ENCODE measurements at regions of chr7 and their contacts with region 1.

Region 1: DNA sequence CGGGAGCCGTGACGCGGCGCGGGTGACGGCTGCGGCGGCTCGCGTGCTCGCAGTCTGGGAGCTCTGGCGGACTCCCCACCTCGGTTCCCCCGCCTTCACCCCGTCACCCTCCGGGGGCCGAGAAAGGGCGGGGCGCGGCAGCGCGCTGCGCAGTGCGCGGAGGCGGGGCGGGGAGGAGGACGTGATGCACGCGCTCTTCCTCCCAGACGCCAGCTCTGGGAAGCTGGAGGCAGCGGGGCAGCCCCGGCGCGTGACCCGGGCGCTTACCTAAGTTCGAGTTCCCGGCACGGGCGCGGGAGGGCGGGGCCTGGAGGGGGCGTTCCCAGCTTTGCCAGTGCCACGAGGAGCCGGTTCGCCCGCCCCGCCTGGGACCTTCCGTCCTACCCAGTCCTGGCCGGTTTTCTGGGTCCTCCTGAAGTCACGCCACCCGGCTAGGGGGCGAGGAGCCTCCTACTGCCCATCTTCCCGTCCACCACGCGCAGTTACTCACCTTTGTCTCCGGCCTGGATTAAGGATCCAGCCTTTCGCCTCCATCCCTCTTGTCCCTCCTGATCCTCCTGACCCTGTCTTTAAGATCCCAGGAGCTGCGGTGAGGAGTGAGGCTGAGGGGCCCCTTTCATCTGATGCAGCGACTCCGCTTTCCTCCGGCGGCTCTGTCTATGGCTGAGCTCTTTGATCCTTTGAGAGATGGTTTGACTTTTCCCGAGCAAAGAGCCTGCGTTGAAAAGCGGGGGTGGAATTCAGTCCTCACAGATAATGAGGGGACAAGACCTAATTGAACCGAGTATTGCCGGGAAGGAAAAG is 470 bp upstream of the NAMPT start:
- DNase-seq: peak; percentile 97 to 99
- H3K4me3 ChIP-seq: peak overlapping the region; percentile 79 to 97
- H3K27ac ChIP-seq: peak overlapping the region; percentile 95 to 99
- H3K4me1 ChIP-seq: peaks cover 0 to 3% of the 10 kb centered on the region in 2 donors
- H3K27me3 ChIP-seq: no peaks in the 10 kb centered on the region
- CTCF ChIP-seq: no peak

Region 2: GRCh38 chr7:105876091-105876963 is 408.9 kb before region 1 on chr7 and contains the start of gene ATXN7L1:
- intact Hi-C with region 1: loop called (anchors 2 kb)
- DNase-seq: peak; percentile 84 to 96
- H3K4me3 ChIP-seq: peak within 1 kb of the TSS; percentile 76 to 99
- H3K27ac ChIP-seq: peak within 1 kb of the TSS; percentile 58 to 76
- H3K4me1 ChIP-seq: peaks cover 3 to 4% of the 10 kb centered on the region in 2 donors
- H3K27me3 ChIP-seq: no peaks in the 10 kb centered on the region
- CTCF ChIP-seq: peak; percentile 28 to 89 (median 52)
- total RNA-seq, gene ATXN7L1: 7.5 TPM

Region 3: DNA sequence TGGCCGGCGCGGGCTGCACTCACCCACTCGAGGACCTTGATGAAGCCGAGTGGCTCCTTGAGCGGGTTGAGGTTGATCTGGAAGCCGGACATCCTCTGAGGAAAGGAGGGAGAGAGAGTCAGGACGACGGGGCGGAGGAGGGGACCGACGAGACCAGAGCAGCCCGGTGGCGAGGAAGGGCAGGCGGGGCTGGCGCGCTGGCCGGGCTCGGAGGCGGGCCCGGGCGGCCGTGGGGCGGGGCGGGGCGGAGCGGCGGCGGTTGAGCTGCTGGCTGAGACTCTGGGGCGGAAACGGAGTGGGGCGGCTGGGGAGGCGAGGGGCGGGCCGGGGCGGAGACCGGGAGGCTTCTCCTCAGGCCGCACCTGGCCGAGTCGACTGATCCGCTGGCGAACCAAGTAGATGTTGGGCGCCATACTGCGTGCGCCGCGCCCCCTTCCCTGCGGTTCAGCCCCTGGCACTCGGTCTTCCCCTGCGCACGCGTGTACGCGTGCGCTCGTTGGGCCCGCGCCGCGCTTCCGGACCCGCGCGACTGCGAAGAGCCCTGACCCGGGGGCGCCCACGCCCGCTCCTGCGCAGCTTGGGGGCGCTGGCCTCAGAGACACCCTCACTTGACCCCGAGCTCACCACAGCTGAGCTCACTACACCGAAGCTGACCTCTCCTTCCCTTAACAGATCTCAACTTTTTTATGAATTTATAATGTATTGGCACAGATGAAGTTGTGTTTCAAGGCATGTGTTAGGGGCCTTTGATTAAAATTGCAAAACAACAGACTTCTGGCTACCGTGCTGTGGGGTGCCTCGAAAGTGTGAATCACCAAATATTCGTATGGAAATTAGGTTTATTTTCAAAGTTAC is 172.9 kb before region 1 on chr7 and contains the start of gene SYPL1:
- intact Hi-C with region 1: loop called (anchors 5 kb)
- DNase-seq: peak; percentile 70 to 95
- H3K4me3 ChIP-seq: peak within 1 kb of the TSS; percentile 69 to 76
- H3K27ac ChIP-seq: peak within 1 kb of the TSS; percentile 98
- H3K4me1 ChIP-seq: peaks cover 3 to 12% of the 10 kb centered on the region in 2 donors
- H3K27me3 ChIP-seq: no peaks in the 10 kb centered on the region
- CTCF ChIP-seq: peak in 1 of 3 experiments; percentile 16
- total RNA-seq, gene SYPL1: 17.5 TPM

Region 4: DNA sequence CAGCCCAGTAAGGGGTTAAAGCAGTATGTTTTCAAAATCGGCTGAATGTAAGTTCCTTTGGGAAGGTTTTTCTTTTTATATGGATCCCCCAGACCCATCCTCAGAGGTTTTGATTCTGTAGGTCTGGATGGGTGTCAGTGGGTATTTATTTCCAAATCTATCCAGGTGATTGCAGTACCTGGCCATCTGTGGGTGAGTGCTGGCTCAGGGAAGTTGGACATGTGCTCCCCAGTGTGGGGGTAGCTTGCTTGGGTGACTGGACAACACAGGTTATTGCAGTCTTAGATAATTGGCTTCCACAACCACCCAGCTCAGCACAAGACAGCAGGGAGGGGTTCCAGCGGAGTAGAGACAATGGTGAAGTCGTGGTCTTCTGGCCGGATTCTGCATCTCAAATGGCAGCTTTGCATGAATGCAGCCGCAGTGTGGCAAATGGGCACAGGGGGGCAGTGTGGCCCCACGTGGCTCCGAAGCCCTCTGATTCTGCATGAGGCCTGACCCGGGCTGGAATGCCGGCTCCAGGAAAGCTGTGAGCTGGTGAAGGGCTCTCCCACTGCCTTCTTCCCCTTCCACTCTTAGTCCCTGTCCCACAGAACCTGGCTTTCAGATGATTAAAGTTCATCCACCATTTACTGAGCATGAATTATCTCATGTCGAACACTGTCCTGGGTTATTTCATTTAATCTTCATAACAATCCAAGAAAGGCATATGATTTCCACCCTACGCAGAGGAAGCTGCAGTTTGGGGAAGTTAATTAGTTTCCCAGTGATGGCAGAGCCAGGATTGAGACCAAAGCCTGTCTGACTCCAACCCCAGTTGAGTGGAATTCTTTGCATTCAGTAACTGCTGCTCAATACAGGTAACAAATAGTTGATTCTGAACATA is 108.6 kb before region 1 on chr7:
- intact Hi-C with region 1: loop called (anchors 5 kb)
- DNase-seq: peak; percentile 41 to 92
- H3K4me3 ChIP-seq: no peak overlapping the region
- H3K27ac ChIP-seq: no peak overlapping the region
- H3K4me1 ChIP-seq: no peaks in the 10 kb centered on the region
- H3K27me3 ChIP-seq: no peaks in the 10 kb centered on the region
- CTCF ChIP-seq: peak; percentile 91 to 98 (median 93)

Region 5: DNA sequence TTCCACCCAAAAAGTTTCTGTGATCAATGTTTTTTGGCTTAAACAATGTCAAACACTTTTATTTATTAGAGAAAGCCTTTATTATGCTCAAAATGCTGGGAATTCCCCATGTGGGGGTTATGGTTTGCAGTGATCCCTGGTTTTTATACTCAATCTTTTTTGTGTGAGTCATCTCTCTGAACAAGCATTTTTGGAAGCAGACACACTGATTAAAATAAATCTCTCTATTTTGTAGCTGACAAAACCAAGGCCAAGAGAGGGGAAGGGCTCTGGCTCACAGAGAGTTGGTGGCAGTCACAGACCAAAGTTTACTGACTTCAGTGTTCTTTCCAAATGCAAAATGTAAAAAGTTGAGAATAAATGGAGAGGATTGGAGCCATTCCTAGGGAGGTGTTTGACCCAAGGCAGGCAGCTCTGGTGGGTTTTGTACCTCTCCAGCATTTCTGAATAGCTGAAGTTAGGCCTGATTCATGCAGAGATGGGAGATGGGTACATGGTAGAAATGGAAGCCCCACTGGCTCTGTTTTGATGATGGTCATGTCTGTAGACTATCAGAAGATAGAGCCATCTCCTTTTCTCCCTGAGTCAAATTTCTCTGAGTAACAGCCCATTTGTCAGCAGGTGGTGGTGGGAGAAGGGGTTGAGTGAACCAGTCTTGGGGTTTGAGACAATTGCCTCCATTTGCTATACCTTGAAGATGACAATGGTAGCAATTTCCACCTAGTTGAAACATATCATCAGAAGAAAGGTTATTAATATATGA is 44.9 kb after region 1 on chr7:
- intact Hi-C with region 1: loop called (anchors 2 kb)
- DNase-seq: no peak
- H3K4me3 ChIP-seq: no peak overlapping the region
- H3K27ac ChIP-seq: peak overlapping the region in 1 of 2 donors; percentile 44
- H3K4me1 ChIP-seq: peaks cover 6 to 10% of the 10 kb centered on the region in 2 donors
- H3K27me3 ChIP-seq: no peaks in the 10 kb centered on the region
- CTCF ChIP-seq: no peak

Region 6: DNA sequence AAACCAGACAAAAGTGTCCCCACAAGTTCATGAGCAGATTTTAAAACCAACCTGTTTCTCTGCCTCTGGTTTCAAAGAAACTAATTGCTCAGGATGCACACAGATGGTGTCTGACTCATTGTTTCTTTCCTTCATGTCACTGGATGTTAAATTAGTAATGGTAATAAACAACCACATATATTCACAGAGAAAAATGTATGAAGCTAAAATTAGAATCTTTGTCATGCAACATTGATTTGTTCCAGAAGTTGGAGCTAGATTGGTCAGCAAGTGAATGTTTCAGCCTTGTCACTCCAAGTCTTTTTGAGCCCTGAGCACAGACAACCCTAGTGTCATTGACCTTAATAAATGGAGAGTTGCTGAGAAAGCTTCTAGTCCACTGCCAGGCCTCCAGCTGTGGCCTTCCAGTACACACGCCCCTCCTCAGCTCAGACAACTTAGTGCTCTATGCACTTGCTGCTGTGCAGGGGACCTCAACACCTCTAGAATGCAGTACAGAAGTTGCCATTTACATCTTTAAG is 199.8 kb after region 1 on chr7:
- intact Hi-C with region 1: no loop called
- DNase-seq: no peak
- H3K4me3 ChIP-seq: no peak overlapping the region
- H3K27ac ChIP-seq: no peak overlapping the region
- H3K4me1 ChIP-seq: no peaks in the 10 kb centered on the region
- H3K27me3 ChIP-seq: no peaks in the 10 kb centered on the region
- CTCF ChIP-seq: no peak

Region 7: DNA sequence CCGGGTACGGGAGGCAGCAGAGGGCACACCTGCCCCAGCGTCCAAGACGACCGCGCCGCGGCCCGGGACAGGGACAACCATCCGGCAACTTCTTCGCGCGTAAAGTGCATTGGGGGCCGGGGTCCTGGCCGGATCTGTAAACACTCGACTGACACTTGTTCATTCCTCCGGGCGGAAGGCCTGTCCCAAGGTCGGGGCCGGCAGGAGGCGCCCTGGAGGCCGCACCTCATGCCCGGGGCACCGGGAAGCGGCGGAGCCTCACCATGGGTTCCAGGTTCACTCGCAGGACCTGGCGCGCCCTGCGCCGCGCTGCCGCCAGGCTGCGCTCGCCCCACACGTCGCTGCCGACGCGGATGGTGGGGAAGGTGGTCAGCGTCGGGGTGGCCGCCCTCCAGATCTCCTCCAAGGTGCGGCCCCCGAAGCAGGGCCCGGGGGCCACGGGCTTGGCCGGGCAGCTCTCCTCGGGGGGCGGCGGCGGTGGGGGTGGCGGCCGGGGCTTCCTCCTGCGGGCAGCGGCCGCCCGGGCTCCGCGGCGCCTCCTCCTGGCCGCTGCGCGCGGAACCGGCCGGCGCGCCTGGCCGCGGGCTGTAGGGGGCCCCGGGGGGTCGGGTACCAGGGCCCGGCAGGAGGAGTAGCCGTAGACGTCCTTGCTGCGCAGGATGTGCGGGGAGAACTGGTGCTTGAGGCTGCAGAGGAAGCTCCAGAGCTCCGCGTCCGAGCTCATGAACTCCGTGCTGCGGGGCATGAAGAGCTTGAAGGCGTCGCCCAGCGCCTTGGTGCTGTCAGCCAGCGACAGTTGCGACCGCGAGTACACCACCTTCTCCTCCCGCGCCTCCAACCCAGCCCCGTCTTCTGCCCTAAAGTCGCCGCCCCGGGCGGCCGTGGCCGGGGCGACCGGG is 375.0 kb after region 1 on chr7:
- intact Hi-C with region 1: loop called (anchors 2 kb)
- DNase-seq: peak; percentile 30 to 90
- H3K4me3 ChIP-seq: peak overlapping the region; percentile 93 to 99
- H3K27ac ChIP-seq: peak overlapping the region; percentile 96 to 99
- H3K4me1 ChIP-seq: peaks cover 4 to 13% of the 10 kb centered on the region in 2 donors
- H3K27me3 ChIP-seq: no peaks in the 10 kb centered on the region
- CTCF ChIP-seq: peak; percentile 50 to 77 (median 73)

Region 8: GRCh38 chr7:107743567-107744344 is 1458.5 kb after region 1 on chr7 and contains the start of gene CBLL1:
- intact Hi-C with region 1: loop called (anchors 10 kb)
- DNase-seq: peak; percentile 85 to 99
- H3K4me3 ChIP-seq: peak within 1 kb of the TSS; percentile 80 to 92
- H3K27ac ChIP-seq: peak within 1 kb of the TSS; percentile 95
- H3K4me1 ChIP-seq: peaks cover 10 to 20% of the 10 kb centered on the region in 2 donors
- H3K27me3 ChIP-seq: no peaks in the 10 kb centered on the region
- CTCF ChIP-seq: peak; percentile 51 to 76 (median 71)
- total RNA-seq, gene CBLL1: 44.1 TPM

Measured in ascending aorta (tissue), 2 donors.